Astrocyte of the cerebellum (primary cell): ENCODE measurements at regions of chr3 and their contacts with region 1.

Region 1: DNA sequence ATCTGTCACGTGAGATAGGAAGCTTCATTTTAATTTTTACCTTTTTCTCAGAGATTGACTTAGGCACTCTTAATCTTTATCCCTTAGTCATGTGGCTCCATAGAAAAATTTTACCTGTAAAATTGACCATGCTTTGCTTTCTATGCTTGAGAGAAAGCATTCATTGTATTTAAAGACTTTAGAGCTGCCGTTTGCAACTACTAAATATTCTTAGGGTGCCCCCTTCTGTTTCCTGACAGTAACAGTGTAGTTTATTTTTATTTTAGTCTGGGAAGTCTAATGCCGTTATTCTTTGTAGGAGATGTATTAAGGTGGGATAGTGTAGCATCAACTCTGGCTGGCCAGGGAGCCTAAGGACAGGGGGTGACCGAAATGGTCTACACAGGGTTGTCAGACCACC is 84.5 kb upstream of the SYNPR start:
- DNase-seq: peak; percentile 20
- H3K4me3 ChIP-seq: no peak overlapping the region
- CTCF ChIP-seq: peak; percentile 38

Region 2: DNA sequence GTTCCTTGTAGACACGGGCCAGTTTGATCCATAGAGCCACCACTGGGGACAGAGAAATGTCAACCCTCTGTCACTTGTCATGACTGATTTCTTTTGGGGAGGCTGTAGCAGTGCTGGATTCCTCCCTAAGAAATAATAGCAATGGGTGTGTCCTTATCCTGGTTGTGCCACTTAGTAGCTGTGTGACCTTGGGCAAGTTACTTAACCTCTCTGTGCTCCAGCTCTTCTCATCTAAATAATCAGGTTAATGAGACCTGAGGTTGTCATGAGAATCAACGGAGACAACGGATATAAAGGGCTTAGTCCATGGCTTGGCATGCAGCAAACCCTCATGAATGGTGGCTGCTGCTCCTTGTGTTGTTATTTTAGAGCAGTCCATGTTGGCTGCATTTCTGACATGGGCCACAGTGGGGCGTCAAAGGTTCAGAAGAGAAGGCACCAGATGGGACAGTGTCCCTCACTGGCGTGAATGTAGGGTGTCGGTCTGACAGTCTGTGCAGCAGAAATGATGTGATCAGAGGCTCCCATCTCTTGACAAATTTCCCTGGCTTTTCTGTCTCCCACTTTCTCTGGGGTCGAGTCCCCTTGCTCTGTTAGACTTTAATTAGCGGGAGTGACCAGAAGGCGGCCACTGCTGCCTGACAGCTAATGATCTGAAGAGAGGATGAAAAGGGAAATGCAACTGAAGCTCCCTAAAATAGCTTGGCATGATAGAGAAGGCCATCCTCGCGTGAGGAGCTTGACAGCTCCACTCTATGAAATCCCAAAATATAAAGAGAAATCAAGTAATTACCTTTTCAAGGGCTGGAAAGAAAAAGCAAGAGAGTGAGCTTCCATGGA is 527.8 kb before region 1 on chr3:
- in situ Hi-C with region 1: loop called (anchors 25 kb)
- DNase-seq: peak; percentile 46
- H3K4me3 ChIP-seq: no peak overlapping the region
- CTCF ChIP-seq: peak; percentile 76

Region 3: GRCh38 chr3:63245548-63246241 is 52.1 kb after region 1 on chr3:
- in situ Hi-C with region 1: no loop called
- DNase-seq: no peak
- H3K4me3 ChIP-seq: no peak overlapping the region
- CTCF ChIP-seq: no peak